Kidney (tissue), 22 donors: ENCODE measurements at regions of chr7 and their contacts with region 1.

Region 1: GRCh38 chr7:25389489-25390106 is 161.3 kb upstream of the NPVF start:
- DNase-seq: peak in 2 of 5 donors; percentile 84 to 89
- H3K4me3 ChIP-seq: no peak overlapping the region
- H3K27ac ChIP-seq: no peak overlapping the region
- H3K4me1 ChIP-seq: peaks cover 0 to 14% (median 0%) of the 10 kb centered on the region in 3 donors
- H3K27me3 ChIP-seq: no peaks in the 10 kb centered on the region
- CTCF ChIP-seq: peak; percentile 39

Region 2: GRCh38 chr7:25180946-25181345 is 208.7 kb before region 1 on chr7:
- intact Hi-C with region 1: no loop called
- DNase-seq: no peak
- H3K4me3 ChIP-seq: peak overlapping the region in 2 of 3 donors; percentile 68 to 78
- H3K27ac ChIP-seq: no peak overlapping the region
- H3K4me1 ChIP-seq: peaks cover 0 to 4% (median 4%) of the 10 kb centered on the region in 3 donors
- H3K27me3 ChIP-seq: no peaks in the 10 kb centered on the region
- CTCF ChIP-seq: no peak

Region 3: DNA sequence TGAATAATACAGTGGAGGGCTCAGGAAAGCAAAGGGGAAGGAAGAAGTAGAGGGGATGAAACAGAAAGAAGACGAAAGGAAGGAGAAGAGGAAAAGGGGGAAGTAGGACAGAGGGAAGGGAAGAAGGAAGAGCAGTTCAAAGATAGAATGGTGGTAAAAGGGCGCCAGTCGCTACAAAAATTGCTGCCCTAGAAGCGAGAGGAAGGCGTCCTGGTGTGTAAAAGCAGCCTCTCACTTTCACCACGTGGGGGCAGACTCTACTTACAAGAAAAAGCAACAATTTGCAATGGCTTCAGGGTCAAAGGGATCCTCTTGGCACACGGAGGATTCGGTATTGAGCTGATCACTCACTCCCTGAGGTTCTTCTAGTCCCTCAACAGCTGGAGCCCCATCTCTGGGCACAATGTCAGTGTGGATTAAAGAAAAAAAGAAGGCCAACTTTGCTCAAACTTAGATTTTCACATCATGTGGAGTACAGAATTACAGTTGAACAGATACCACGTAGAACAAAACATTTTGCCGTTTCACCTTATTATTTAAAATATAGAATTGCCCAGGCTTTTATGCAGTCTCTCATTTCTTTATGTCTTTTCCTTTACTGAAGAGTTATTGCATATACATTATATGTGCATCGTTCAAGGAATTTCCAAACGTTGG is 129.9 kb before region 1 on chr7:
- intact Hi-C with region 1: loop called (anchors 5 kb)
- DNase-seq: peak in 4 of 5 donors; percentile 82 to 95 (median 86)
- H3K4me3 ChIP-seq: no peak overlapping the region
- H3K27ac ChIP-seq: no peak overlapping the region
- H3K4me1 ChIP-seq: peaks cover 0 to 4% (median 0%) of the 10 kb centered on the region in 3 donors
- H3K27me3 ChIP-seq: no peaks in the 10 kb centered on the region
- CTCF ChIP-seq: peak; percentile 87

Region 4: DNA sequence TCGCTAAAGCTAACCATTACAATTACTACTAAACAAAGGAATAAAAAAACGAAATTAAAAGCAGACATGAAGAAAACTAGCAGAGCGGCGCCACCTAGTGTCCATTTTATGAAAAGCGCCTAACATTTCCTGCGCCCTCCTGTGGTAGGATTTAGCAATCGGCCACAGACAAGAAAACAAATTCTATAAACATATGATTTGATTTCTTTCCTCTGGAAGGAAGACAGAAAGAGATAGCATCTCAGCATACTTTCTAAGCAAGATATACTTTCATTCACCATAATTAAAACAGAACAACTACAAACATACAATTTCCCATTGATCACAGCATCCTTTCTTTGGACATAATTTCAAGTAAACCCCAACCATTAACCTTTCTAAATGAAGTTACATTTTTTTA is 176.4 kb after region 1 on chr7:
- intact Hi-C with region 1: loop called (anchors 10 kb)
- DNase-seq: peak; percentile 68 to 88 (median 84)
- H3K4me3 ChIP-seq: no peak overlapping the region
- H3K27ac ChIP-seq: no peak overlapping the region
- H3K4me1 ChIP-seq: no peaks in the 10 kb centered on the region
- H3K27me3 ChIP-seq: no peaks in the 10 kb centered on the region
- CTCF ChIP-seq: peak; percentile 100

Region 5: GRCh38 chr7:25851332-25852210 is 462.0 kb after region 1 on chr7:
- intact Hi-C with region 1: loop called (anchors 10 kb)
- DNase-seq: peak; percentile 91 to 96 (median 95)
- H3K4me3 ChIP-seq: no peak overlapping the region
- H3K27ac ChIP-seq: peak overlapping the region; percentile 40 to 51
- H3K4me1 ChIP-seq: peaks cover 2 to 17% (median 8%) of the 10 kb centered on the region in 3 donors
- H3K27me3 ChIP-seq: no peaks in the 10 kb centered on the region
- CTCF ChIP-seq: peak; percentile 66